GM12878 (cell line): ENCODE measurements at regions of chr16 and their contacts with region 1.

Region 1: DNA sequence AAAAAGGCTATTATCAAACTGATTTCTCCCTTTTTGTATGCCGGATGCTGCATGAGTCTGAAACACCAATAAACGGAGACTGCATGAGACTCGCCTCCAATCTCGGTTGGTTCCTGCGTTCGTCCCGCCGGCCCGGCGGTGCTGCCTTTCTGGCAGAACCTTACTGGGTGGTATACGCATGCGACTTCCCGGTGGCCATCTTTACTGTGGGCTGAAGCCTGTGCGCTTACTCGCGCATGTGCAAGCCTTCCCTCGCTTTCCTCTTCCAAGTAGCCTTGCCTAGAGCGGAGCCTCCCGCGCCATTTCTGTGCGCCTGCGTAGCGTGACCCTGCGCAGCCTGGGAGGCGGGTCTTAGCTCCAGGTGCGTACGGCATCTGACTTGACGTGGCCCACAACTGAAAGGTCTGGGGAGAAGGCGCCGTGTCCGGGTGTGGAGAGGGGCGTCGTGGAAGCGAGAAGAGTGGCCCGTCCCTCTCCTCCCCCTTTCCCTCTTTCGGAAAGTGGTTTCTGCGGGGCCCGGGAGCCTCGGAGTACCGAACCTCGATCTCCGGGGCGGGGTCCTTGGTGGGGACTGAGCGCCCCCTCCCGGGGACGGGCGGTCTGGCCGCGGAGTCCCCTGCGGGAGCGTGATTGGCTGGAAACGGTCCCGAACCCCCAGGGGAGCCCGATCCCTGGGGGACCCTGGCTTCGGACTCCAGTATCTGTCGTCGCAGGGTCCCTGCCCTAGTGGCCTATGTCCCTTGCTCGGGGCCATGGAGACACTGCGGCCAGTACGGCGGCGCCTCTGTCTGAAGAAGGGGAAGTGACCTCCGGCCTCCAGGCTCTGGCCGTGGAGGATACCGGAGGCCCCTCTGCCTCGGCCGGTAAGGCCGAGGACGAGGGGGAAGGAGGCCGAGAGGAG is at the start of gene PAGR1:
- DNase-seq: peak; percentile 100
- ATAC-seq: peak; percentile 75
- H3K4me3 ChIP-seq: peak within 1 kb of the TSS; percentile 99
- H3K27ac ChIP-seq: peak within 1 kb of the TSS; percentile 90
- H3K4me1 ChIP-seq: peaks cover 20% of the 10 kb centered on the region
- H3K27me3 ChIP-seq: no peaks in the 10 kb centered on the region
- CTCF ChIP-seq: peak; percentile 91 to 98 (median 94)
- EP300 ChIP-seq: peak in 1 of 2 experiments; percentile 11; a peak in 1 of 4 replicates
- POLR2A ChIP-seq: peak; percentile 95
- RAD21 ChIP-seq: peak; percentile 67
- polyA plus RNA-seq, gene PAGR1: 1.1 to 5.5 TPM

Region 2: GRCh38 chr16:29790183-29790952 is 25.7 kb before region 1 on chr16 and contains the start of gene KIF22:
- CTCF ChIA-PET with region 1: interaction called, 10 read pairs
- POLR2A ChIA-PET with region 1: interaction called, 4 read pairs
- RAD21 ChIA-PET with region 1: interaction called, 3 read pairs
- SMC1A ChIA-PET with region 1: interaction called, 7 read pairs
- in situ Hi-C with region 1: no loop called
- intact Hi-C with region 1: no loop called
- DNase-seq: peak; percentile 97
- ATAC-seq: peak; percentile 98
- H3K4me3 ChIP-seq: peak within 1 kb of the TSS; percentile 93
- H3K27ac ChIP-seq: peak within 1 kb of the TSS; percentile 95
- H3K4me1 ChIP-seq: peaks cover 9% of the 10 kb centered on the region; the same call in 1 of the 2 replicates
- H3K27me3 ChIP-seq: no peaks in the 10 kb centered on the region
- CTCF ChIP-seq: peak; percentile 79 to 92 (median 89)
- EP300 ChIP-seq: no peak
- POLR2A ChIP-seq: peak; percentile 97
- RAD21 ChIP-seq: peak; percentile 61
- polyA plus RNA-seq, gene KIF22: 7.6 to 16.9 TPM

Region 3: GRCh38 chr16:29848420-29849297 is 32.6 kb after region 1 on chr16:
- CTCF ChIA-PET with region 1: interaction called, 99 read pairs
- POLR2A ChIA-PET with region 1: interaction called, 14 read pairs
- RAD21 ChIA-PET with region 1: interaction called, 51 read pairs
- SMC1A ChIA-PET with region 1: interaction called, 48 read pairs
- in situ Hi-C with region 1: no loop called
- intact Hi-C with region 1: no loop called
- DNase-seq: no peak
- ATAC-seq: peak; percentile 99
- H3K4me3 ChIP-seq: no peak overlapping the region
- H3K27ac ChIP-seq: no peak overlapping the region
- H3K4me1 ChIP-seq: no peaks in the 10 kb centered on the region
- H3K27me3 ChIP-seq: no peaks in the 10 kb centered on the region
- CTCF ChIP-seq: peak; percentile 88 to 98 (median 90)
- EP300 ChIP-seq: no peak
- POLR2A ChIP-seq: peak; percentile 51
- RAD21 ChIP-seq: peak; percentile 76

Region 4: GRCh38 chr16:29877266-29877961 is 61.4 kb after region 1 on chr16:
- CTCF ChIA-PET with region 1: no interaction called
- POLR2A ChIA-PET with region 1: no interaction called
- RAD21 ChIA-PET with region 1: no interaction called
- SMC1A ChIA-PET with region 1: no interaction called
- in situ Hi-C with region 1: no loop called
- intact Hi-C with region 1: no loop called
- DNase-seq: peak; percentile 40
- ATAC-seq: peak; percentile 95
- H3K4me3 ChIP-seq: no peak overlapping the region
- H3K27ac ChIP-seq: no peak overlapping the region
- H3K4me1 ChIP-seq: no peaks in the 10 kb centered on the region
- H3K27me3 ChIP-seq: peaks cover 4 to 5% of the 10 kb centered on the region in 2 experiments; a peak in 3 of 4 replicates
- CTCF ChIP-seq: no peak
- EP300 ChIP-seq: no peak
- POLR2A ChIP-seq: no peak
- RAD21 ChIP-seq: no peak

Region 5: DNA sequence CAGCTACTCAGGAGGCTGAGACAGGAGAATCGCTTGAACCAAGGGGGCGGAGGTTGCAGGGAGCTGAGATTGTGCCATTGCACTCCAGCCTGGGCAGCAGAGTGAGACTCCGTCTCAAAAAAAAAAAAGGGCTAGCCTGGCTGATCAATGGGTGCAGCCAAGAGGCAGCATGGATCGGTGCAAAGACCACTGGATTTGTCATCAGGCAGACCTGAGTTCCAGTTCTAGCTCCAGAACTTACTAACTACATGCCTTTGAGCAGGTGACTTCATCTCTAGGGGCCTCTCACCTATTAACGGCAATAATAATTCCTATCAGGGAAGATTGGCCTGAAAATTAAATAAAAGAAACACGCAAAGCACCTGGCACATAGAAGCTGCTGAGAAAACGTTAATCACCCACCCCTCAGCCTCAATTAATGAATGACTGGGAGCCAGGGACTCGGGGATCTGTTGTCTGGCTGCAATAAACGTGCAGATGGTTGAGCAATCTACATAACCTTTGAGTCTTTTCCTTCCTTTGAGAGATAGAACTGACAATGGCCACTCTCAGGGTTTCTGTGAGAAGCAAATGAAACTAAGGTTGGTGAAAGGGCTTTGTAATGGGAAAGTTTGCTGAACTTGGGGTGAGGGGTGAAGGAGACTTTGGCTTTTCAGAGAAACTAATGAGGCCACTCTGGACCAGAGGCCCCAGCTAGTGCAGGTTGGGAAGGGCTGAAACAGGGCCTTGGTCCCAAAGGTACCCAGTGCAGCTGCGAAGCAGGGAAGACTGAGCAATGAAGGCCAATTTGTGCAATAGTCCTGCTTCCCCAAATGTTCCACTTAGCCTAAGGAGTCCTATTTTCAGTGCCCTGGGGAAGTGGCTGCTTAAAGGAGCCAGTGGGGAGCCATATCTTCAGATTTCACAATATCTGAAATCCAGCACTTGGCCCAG is 75.7 kb after region 1 on chr16:
- CTCF ChIA-PET with region 1: no interaction called
- POLR2A ChIA-PET with region 1: no interaction called
- RAD21 ChIA-PET with region 1: no interaction called
- SMC1A ChIA-PET with region 1: no interaction called
- in situ Hi-C with region 1: no loop called
- intact Hi-C with region 1: no loop called
- DNase-seq: no peak
- ATAC-seq: no peak
- H3K4me3 ChIP-seq: no peak overlapping the region
- H3K27ac ChIP-seq: no peak overlapping the region
- H3K4me1 ChIP-seq: no peaks in the 10 kb centered on the region
- H3K27me3 ChIP-seq: no peaks in the 10 kb centered on the region
- CTCF ChIP-seq: no peak
- EP300 ChIP-seq: no peak
- POLR2A ChIP-seq: no peak
- RAD21 ChIP-seq: no peak

Region 6: DNA sequence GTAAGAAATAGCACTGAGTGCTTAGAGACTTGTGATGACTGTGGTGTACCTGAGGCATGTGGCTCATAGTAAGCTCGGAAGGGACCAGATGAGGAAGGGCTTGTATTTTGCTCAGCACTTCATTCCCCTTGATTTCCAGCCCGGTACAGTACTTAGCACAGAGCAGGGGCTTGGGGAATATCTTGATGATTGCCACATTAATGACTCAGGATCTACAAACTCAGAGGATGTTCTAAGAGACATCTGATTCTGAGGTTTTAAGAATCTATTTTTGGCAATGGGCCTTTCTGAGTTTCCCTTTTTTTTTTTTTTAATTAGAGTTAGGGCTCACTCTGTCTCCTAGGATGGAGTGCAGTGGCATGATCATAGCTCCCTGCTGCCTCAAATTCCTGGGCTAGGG is 93.3 kb after region 1 on chr16:
- CTCF ChIA-PET with region 1: no interaction called
- POLR2A ChIA-PET with region 1: no interaction called
- RAD21 ChIA-PET with region 1: no interaction called
- SMC1A ChIA-PET with region 1: no interaction called
- in situ Hi-C with region 1: no loop called
- intact Hi-C with region 1: no loop called
- DNase-seq: no peak
- ATAC-seq: no peak
- H3K4me3 ChIP-seq: no peak overlapping the region
- H3K27ac ChIP-seq: no peak overlapping the region
- H3K4me1 ChIP-seq: no peaks in the 10 kb centered on the region
- H3K27me3 ChIP-seq: no peaks in the 10 kb centered on the region
- CTCF ChIP-seq: no peak
- EP300 ChIP-seq: no peak
- POLR2A ChIP-seq: no peak
- RAD21 ChIP-seq: no peak

Region 7: GRCh38 chr16:29973384-29974246 is 157.6 kb after region 1 on chr16 and contains the start of gene TAOK2:
- CTCF ChIA-PET with region 1: interaction called, 5 read pairs
- POLR2A ChIA-PET with region 1: interaction called, 20 read pairs
- RAD21 ChIA-PET with region 1: no interaction called
- SMC1A ChIA-PET with region 1: no interaction called
- in situ Hi-C with region 1: no loop called
- intact Hi-C with region 1: no loop called
- DNase-seq: peak; percentile 92
- ATAC-seq: peak; percentile 98
- H3K4me3 ChIP-seq: peak within 1 kb of the TSS; percentile 99
- H3K27ac ChIP-seq: peak within 1 kb of the TSS; percentile 90
- H3K4me1 ChIP-seq: peaks cover 9% of the 10 kb centered on the region
- H3K27me3 ChIP-seq: no peaks in the 10 kb centered on the region
- CTCF ChIP-seq: no peak
- EP300 ChIP-seq: no peak
- POLR2A ChIP-seq: peak; percentile 85
- RAD21 ChIP-seq: no peak
- polyA plus RNA-seq, gene TAOK2: 0.14 to 0.51 TPM

Region 8: DNA sequence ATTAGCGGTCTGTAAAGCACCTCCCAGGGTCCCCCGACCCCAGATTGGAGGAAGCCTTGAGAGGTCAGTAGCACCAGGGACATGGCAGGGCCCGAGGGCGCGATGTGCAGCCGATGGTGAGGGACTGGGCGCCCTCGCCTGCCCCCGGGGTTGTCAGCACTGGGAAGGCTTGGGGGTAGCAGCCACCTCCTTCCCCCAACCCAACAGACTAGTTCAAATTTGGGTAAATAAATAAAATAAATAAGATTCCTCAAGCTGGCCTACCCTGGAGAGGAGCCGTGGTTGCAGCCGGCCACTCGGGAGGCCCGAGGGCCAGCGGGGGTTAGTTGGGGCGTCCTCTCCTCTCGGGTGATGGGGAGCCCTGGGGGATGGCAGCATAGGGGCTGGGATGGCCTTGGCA is 208.4 kb after region 1 on chr16:
- CTCF ChIA-PET with region 1: no interaction called
- POLR2A ChIA-PET with region 1: no interaction called
- RAD21 ChIA-PET with region 1: no interaction called
- SMC1A ChIA-PET with region 1: no interaction called
- in situ Hi-C with region 1: no loop called
- intact Hi-C with region 1: loop called (anchors 5 kb)
- DNase-seq: no peak
- ATAC-seq: no peak
- H3K4me3 ChIP-seq: no peak overlapping the region
- H3K27ac ChIP-seq: no peak overlapping the region
- H3K4me1 ChIP-seq: 0 out of 2 replicates have a peak, but pooled peaks cover 2% of the 10 kb centered on the region
- H3K27me3 ChIP-seq: peaks cover 3 to 6% of the 10 kb centered on the region in 2 experiments; a peak in 3 of 4 replicates
- CTCF ChIP-seq: no peak
- EP300 ChIP-seq: no peak
- POLR2A ChIP-seq: no peak
- RAD21 ChIP-seq: no peak